ENCODE measurements at regions of chr20 and their contacts with region 1.

Region 1: DNA sequence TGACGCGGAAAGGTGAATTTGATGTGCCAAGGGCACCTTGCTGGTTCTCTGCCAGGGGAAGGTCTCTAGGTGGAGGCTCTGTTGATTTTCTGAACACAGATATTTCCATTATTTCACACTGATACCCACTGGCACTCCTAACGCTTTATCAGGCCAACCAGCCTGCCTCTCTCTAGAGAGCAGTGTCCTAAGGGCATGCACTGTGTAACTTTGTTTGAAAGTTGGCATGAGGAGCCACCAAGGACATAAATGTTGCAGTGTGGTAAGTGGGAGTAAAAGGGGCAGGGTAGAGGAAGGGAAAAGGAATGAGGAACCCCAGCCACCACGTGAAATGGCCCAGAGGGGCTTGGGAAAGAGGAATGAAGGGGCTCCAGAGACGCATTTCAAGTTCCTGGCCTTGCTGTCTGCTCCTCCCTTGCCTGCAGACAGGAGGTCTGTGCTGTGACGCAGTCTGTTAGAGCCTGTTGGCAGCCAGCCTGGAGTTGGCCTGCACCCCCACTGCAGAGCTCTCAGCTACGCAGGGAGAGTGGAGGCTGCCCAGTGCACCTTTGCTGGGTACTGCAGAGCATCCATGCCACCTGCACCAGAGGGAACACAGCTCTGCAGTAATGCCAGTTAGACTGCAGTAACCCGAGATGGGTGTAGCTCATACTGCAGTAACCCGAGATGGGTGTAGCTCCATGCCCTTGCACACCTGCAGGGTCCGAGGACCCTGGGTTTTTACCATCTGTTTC is 86.9 kb upstream of the SNAP25 start:
- DNase-seq: peak; percentile 65 to 87 (median 76)
- ATAC-seq: peak; percentile 93 to 99 (median 98)
- H3K4me3 ChIP-seq: no peak overlapping the region
- H3K27ac ChIP-seq: peak overlapping the region in 8 of 12 donors; percentile 31 to 82 (median 42)
- H3K4me1 ChIP-seq: peaks cover 0 to 12% (median 0%) of the 10 kb centered on the region in 12 donors
- H3K27me3 ChIP-seq: no peaks in the 10 kb centered on the region
- CTCF ChIP-seq: peak in 2 of 12 donors; percentile 9 to 34
- POLR2A ChIP-seq: no peak

Region 2: DNA sequence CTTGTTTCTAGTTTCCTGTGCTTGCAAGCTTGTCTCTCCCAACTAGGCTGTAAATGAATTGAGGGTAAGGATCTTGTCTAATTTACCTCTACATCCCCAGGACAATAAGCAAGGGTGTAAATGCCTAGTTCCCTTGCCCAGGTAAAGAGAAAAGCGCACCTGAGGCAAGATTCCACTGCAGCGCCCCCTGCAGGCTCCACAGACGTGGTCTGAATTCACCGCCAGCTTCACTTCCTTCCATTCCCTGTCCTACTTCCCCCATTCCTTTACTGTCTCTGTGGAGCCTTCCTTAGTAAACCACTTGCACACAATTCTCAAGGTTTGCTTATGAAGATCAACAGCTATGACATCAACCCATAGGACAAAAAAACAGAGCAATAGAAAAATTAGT is 54.7 kb before region 1 on chr20:
- intact Hi-C with region 1: loop called in 1 of 10 experiments (anchors 5 kb)
- DNase-seq: no peak
- ATAC-seq: no peak
- H3K4me3 ChIP-seq: no peak overlapping the region
- H3K27ac ChIP-seq: peak overlapping the region in 8 of 12 donors; percentile 8 to 76 (median 58)
- H3K4me1 ChIP-seq: peaks cover 0 to 22% (median 3%) of the 10 kb centered on the region in 12 donors
- H3K27me3 ChIP-seq: peaks cover 0 to 6% (median 0%) of the 10 kb centered on the region in 9 donors
- CTCF ChIP-seq: peak in 7 of 12 donors; percentile 2 to 32 (median 16)
- POLR2A ChIP-seq: no peak

Region 3: DNA sequence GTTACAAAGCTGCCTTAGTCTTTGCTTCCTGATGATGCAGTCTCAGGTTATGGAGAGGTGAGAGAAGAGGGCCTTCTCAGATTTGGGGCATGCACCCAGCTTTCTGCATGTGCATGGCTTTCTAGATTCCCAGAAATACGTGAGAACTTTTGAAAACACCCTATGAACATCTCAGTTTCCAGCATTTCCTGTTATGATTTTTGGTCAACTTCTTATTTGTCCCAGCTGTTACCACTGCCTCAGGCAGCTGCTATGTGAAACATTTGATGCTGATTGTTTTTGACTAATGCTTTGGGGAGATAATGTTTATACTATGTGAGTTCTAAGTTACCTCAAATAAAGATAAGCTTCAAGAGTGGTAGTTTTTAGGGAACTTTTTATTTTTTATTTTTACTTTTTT is 77.3 kb after region 1 on chr20:
- intact Hi-C with region 1: no loop called
- DNase-seq: no peak
- ATAC-seq: no peak
- H3K4me3 ChIP-seq: no peak overlapping the region
- H3K27ac ChIP-seq: no peak overlapping the region
- H3K4me1 ChIP-seq: no peaks in the 10 kb centered on the region
- H3K27me3 ChIP-seq: peaks cover 0 to 15% (median 0%) of the 10 kb centered on the region in 9 donors
- CTCF ChIP-seq: no peak
- POLR2A ChIP-seq: no peak

Region 4: DNA sequence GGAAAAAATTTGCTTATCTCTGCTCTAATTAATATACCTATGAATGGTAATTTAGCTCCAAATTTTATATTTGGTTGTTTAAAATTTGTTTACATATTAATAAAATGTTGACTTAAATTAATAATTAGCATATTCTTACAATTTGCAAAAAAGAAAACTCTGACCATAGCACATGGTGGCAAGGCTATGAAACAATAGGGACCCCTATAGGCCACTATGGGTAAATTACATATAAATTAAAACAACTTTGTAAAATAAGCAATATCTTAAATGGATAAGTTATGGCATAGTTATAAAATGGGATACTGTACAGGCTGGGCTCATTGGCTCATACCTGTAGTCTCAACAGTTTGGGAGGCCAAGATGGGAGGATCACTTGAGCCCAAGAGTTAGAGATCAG is 226.2 kb after region 1 on chr20:
- intact Hi-C with region 1: loop called in 1 of 10 experiments (anchors 10 kb)
- DNase-seq: no peak
- ATAC-seq: no peak
- H3K4me3 ChIP-seq: no peak overlapping the region
- H3K27ac ChIP-seq: no peak overlapping the region
- H3K4me1 ChIP-seq: peaks cover 0 to 14% (median 0%) of the 10 kb centered on the region in 12 donors
- H3K27me3 ChIP-seq: no peaks in the 10 kb centered on the region
- CTCF ChIP-seq: peak in 9 of 12 donors; percentile 16 to 42 (median 36)
- POLR2A ChIP-seq: no peak

Measured in heart left ventricle (tissue), 16 donors.